ENCODE measurements at regions of chr1 and their contacts with region 1.

Region 1: GRCh38 chr1:93846211-93846991 is 32.6 kb downstream of the DNTTIP2 start:
- DNase-seq: peak; percentile 95 to 96
- ATAC-seq: peak; percentile 87
- H3K4me3 ChIP-seq: peak overlapping the region; percentile 48 to 56
- H3K27ac ChIP-seq: peak overlapping the region; percentile 81 to 91
- H3K4me1 ChIP-seq: no peaks in the 10 kb centered on the region
- H3K27me3 ChIP-seq: no peaks in the 10 kb centered on the region

Region 2: DNA sequence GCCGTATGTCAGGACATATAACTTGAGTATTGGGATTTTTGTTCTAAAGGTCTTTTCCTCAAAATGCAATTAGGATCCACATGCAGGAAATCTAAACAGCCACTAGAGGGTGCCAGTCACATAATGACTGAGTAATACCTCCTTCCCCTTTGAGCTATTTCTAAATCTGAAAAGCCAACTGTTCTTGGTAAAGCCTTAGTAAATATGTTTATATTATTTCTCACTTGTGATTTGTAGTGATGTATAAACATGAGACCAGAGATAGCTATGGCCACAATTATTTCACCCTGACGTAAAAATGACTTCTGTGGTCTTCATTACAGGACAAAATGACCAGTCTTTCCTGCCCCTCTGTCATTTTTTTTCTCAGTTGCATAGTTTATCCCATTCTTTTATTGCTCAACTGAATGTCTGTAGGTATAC is 541.7 kb before region 1 on chr1:
- intact Hi-C with region 1: loop called (anchors 5 to 10 kb)
- DNase-seq: no peak
- ATAC-seq: peak; percentile 80
- H3K4me3 ChIP-seq: no peak overlapping the region
- H3K27ac ChIP-seq: no peak overlapping the region
- H3K4me1 ChIP-seq: no peaks in the 10 kb centered on the region
- H3K27me3 ChIP-seq: no peaks in the 10 kb centered on the region

Region 3: GRCh38 chr1:93345633-93346420 is 500.6 kb before region 1 on chr1 and contains the start of gene DR1:
- intact Hi-C with region 1: loop called in 1 of 2 experiments (anchors 5 kb)
- DNase-seq: peak; percentile 96 to 98
- ATAC-seq: peak; percentile 98
- H3K4me3 ChIP-seq: peak within 1 kb of the TSS; percentile 84 to 91
- H3K27ac ChIP-seq: peak within 1 kb of the TSS; percentile 45 to 91
- H3K4me1 ChIP-seq: no peaks in the 10 kb centered on the region
- H3K27me3 ChIP-seq: no peaks in the 10 kb centered on the region
- total RNA-seq, gene DR1: 44.7 to 45.2 TPM

Region 4: GRCh38 chr1:93437976-93438605 is 408.3 kb before region 1 on chr1:
- intact Hi-C with region 1: loop called (anchors 5 kb)
- DNase-seq: no peak
- ATAC-seq: no peak
- H3K4me3 ChIP-seq: no peak overlapping the region
- H3K27ac ChIP-seq: no peak overlapping the region
- H3K4me1 ChIP-seq: no peaks in the 10 kb centered on the region
- H3K27me3 ChIP-seq: peaks cover 0 to 2% of the 10 kb centered on the region in 2 donors

Region 5: DNA sequence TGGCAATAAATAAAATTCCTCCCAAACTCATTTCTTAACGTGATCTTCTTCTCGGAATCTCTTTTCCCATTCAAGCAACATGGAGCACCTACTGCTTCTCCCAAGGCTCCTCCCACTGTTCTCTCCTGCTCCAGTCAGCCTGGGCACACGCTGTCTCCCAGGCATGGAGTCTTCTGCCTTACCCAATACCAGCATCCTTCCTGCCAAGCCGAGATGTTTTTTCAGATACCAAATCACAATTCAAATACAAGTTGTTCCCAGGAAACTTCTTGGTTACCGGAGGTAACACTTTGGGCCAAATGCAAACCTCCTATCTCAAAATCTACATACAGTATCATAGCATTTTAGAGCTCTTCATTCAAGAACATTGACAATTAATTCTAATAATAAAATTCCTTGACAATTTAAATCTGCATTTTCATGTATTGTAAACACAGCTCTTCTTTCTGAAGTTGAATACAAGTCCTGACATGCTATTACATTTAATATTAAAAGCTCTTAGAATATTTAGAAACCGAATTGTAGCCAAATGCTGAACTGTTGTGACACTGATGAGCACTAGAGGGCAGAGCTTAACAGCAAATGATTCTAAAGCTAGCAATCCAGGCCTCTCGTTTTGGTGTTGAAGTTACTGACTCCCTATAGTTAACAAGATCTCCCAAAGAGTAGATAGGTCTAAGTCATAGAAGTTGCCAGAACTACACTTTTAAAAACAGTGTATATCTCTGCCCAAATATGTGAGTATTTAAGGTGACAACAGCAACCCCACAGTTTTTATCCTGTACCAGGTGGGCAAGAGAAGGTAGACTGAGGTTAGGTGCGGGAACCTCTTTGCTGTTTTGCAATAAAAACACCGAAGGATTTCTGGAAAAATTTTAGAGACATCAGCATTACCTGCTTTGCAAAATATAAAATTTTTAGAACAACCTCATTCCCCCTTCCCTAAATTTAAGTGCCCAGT is 217.0 kb before region 1 on chr1:
- intact Hi-C with region 1: loop called (anchors 10 kb)
- DNase-seq: no peak
- ATAC-seq: peak; percentile 80
- H3K4me3 ChIP-seq: no peak overlapping the region
- H3K27ac ChIP-seq: no peak overlapping the region
- H3K4me1 ChIP-seq: no peaks in the 10 kb centered on the region
- H3K27me3 ChIP-seq: no peaks in the 10 kb centered on the region

Region 6: DNA sequence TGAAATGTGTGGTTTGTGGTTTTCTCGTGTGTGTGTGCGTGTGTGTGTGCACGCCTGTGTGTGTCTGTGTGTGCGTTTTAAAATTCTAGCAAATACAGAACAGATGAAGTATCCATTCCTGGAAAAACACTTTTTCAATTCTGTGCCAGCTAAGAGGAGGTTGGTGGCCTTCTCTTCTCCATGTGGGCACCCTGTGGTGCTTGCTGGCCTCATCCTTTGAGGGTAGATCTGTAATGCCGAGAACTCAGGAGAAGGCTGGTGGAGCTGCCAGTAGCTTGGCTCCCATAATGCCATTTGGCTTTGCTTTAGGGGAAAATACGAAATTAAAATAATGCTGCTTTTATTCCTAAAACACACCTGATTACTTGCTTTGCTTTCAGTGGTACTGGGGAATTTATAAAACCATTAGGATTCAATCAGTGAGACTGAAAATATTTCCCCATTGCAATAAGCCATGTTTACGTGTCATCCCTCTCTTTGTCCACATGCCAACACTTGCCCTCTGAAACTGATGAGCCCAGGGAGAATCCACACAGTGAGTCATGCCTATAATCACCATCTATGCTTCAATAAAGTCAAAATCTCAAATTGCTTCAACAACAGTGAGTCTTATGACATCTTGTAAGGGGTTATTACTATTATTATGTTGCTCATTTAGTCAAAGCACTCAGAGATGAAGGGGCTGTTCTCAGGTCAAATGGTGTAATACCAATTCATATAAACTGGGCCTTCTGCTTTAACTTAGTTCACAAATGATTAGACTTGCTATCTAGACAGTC is 235.4 kb after region 1 on chr1:
- intact Hi-C with region 1: no loop called
- DNase-seq: no peak
- ATAC-seq: no peak
- H3K4me3 ChIP-seq: no peak overlapping the region
- H3K27ac ChIP-seq: no peak overlapping the region
- H3K4me1 ChIP-seq: no peaks in the 10 kb centered on the region
- H3K27me3 ChIP-seq: no peaks in the 10 kb centered on the region

Measured in aorta (tissue), 5 donors.